BJ (cell line): ENCODE measurements at regions of chr2 and their contacts with region 1.

Region 1: DNA sequence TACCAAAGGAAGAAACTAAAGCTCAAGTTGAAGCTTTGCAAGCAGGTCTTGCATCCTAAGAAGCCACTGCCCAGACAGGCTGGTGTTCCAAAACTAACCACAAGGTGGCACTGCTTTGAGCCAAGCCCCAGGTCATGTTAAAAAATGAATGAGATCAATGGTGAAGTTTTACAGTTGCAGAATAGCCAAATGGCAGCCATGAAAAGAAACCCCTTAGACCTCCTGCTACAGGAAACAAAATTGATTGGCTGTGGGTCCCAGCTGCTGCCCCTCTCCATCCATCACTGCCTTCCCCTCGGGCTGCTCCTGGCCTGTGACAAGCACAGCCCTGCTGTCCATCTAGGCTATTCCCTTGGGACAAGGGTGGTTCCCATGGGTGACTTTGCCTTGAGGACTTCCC is 20.7 kb upstream of the MREG start:
- DNase-seq: no peak
- H3K4me3 ChIP-seq: no peak overlapping the region
- H3K27me3 ChIP-seq: no peaks in the 10 kb centered on the region
- CTCF ChIP-seq: peak; percentile 90

Region 2: DNA sequence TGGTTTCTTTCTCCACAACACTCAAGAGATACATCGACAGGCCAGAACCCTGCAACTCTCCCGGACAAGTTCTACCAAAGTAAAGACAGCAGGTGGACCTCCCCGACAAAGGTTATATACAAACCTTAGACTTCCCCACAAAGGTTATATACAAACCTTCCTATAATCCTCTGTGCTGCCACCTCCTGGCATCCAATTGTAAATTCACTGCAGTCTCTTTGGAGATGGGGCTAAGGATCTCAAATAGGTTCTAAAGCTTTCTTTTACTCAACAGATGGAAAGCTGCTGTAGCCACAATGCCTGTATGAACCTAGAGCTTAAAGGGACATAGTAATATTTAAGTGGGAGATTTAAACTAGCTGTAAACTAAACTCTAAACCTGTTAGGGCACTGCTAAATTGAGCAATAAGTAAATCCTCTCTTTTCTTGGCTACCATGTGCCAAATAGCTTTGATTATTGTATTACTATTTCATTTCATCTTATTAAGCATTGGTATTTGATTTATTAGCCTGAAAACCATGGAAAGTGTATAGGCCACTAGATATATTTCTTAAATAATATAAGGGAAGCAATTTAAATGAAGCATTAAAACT is 10.9 kb before region 1 on chr2:
- CTCF ChIA-PET with region 1: interaction called, 57 read pairs
- POLR2A ChIA-PET with region 1: no interaction called
- DNase-seq: no peak
- H3K4me3 ChIP-seq: no peak overlapping the region
- H3K27me3 ChIP-seq: no peaks in the 10 kb centered on the region
- CTCF ChIP-seq: peak; percentile 77

Region 3: DNA sequence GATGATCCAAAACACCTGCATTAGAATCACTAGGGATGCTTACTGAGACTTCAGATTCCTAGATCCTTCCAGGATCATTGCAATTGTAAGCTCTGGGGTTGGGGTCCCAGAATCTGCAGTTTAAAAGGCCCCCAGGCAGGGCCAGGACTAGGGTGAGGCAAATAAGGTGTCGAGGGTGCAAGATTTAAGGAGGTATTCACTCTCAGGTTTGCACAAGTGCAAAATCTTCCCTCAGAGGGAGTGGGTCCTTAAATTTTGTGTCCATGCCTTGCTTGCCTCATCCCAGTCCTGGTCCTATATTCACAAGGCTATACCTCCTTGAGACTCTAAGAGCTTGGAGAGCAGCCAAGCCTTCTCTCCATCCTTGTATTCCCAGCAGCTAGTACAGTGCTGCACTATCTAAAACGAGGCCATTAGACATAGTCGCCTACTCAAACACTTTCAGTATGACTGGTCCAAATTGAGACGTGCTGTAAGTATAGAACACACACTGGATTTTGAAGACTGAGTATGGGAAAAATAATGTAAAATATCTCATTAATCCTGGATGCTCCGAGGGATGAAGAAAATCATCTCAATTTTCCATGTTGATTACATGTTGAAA is 10.9 kb after region 1 on chr2:
- CTCF ChIA-PET with region 1: interaction called, 29 read pairs
- POLR2A ChIA-PET with region 1: no interaction called
- DNase-seq: no peak
- H3K4me3 ChIP-seq: no peak overlapping the region
- H3K27me3 ChIP-seq: no peaks in the 10 kb centered on the region
- CTCF ChIP-seq: no peak

Region 4: DNA sequence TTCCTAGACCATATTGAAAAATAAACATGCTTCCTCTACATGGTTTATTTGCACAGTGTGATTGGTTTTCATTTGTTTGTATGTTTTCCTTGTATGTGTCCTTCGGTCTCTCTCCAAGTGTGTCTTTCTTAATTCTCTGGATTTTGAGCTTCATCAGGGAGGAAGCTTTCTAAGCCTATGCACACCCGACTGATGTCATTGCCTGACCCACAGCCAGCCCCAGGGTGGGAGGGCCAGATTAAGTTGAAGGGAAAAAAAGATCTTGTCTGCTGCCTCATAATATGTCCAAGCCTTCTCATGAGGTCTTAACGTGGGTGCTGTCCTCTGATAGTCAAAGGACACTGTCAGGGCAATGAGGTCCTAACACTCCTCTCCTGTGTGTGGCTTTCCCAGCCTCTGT is 223.0 kb after region 1 on chr2:
- CTCF ChIA-PET with region 1: no interaction called
- POLR2A ChIA-PET with region 1: no interaction called
- DNase-seq: no peak
- H3K4me3 ChIP-seq: no peak overlapping the region
- H3K27me3 ChIP-seq: no peaks in the 10 kb centered on the region
- CTCF ChIP-seq: no peak